Activated T-helper 1 cell treated with anti-CD3 and anti-CD28 coated beads, Interleukin-12 subunit alpha, Interleukin-12 subunit beta, Interleukin-2, Interleukin-4 antibody, amounts not matched to agents 30 ng/mL and 10 ng/mL and 1 ng/mL, durations not matched to agents 14 hours and 24 hours and 36 hours (primary cell): ENCODE measurements at regions of chr7 and their contacts with region 1.

Region 1: DNA sequence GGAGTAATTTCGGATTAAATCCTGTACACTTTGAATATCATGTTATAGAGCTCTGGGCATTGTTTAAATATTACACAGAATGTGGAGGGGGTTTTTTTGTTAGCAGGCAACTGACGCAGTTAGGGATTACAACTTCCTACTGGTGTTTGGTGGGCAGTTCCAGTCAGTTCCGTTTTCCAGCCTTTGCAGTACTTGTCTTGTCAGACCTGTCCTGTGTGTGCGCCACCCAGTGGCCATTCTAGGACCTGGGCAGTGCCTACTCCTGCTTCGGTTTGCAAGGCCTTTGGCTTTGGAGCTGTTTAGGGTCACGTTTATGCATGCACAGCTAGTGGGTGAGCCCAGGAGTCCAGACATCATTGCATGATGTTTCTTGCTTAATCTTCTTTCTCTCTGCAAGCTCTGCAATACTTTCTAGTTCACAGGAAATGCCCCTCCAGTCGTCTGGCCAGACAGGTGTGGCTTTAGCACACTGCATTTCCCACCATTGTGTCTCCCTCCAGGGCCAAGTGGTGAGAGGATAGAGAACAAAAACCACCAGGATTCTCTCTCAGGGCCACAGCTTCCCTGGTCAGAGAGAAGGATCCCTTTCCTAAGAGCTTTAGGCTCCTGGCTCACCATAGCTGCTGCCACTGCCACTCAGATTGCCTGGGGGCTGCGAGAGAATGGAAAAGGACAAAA is 96.5 kb upstream of the TARP start:
- DNase-seq: peak; percentile 61
- H3K4me3 Mint-ChIP-seq: no peak overlapping the region
- H3K27ac Mint-ChIP-seq: peak overlapping the region; percentile 41
- H3K4me1 Mint-ChIP-seq: peaks cover 40% of the 10 kb centered on the region
- H3K27me3 Mint-ChIP-seq: no peaks in the 10 kb centered on the region

Region 2: DNA sequence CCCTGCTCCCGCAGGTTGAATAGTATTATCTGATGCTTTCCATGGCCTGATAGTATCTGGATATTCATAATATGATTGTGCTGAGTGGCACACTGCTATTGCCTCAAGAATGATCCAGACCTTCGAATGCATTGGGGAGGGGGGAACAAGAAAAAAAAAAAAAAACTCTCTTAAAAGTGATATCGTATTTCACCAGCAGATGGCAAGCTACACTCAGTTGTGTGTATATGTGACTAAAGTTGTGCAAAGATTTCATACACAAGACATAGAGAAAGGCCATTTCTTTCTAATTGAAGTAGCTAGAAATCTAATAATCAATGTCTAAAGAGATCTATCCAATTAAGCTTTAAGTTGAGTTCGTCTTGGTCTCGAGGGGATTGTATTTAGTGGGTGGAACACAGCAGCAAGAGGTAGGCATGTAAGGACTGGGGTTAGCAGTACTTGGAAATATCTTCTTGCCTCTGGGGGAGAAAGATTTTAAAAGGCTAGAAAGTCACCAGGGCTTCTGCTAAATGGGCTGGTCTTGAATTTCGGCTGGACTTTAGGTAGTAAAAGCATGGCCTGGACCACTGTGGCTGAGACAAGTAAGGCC is 468.6 kb before region 1 on chr7:
- intact Hi-C with region 1: loop called (anchors 1 kb)
- DNase-seq: no peak
- H3K4me3 Mint-ChIP-seq: no peak overlapping the region
- H3K27ac Mint-ChIP-seq: no peak overlapping the region
- H3K4me1 Mint-ChIP-seq: no peaks in the 10 kb centered on the region
- H3K27me3 Mint-ChIP-seq: peaks cover 2% of the 10 kb centered on the region

Region 3: GRCh38 chr7:38478404-38478803 is 108.4 kb after region 1 on chr7:
- intact Hi-C with region 1: no loop called
- DNase-seq: no peak
- H3K4me3 Mint-ChIP-seq: no peak overlapping the region
- H3K27ac Mint-ChIP-seq: no peak overlapping the region
- H3K4me1 Mint-ChIP-seq: no peaks in the 10 kb centered on the region
- H3K27me3 Mint-ChIP-seq: peaks cover 2% of the 10 kb centered on the region